ENCODE measurements at regions of chr7 and their contacts with region 1.

Region 1: GRCh38 chr7:70698219-70698832 is 433.6 kb upstream of the GALNT17 start:
- DNase-seq: no peak
- H3K4me3 ChIP-seq: no peak overlapping the region
- H3K27ac ChIP-seq: no peak overlapping the region
- H3K4me1 ChIP-seq: peaks cover 3 to 32% (median 22%) of the 10 kb centered on the region in 6 donors
- H3K27me3 ChIP-seq: peaks cover 0 to 46% (median 18%) of the 10 kb centered on the region in 7 donors
- CTCF ChIP-seq: peak; percentile 52 to 87 (median 74)
- POLR2A ChIP-seq: no peak

Region 2: GRCh38 chr7:70040970-70041766 is 657.2 kb before region 1 on chr7:
- intact Hi-C with region 1: loop called (anchors 5 kb)
- DNase-seq: no peak
- H3K4me3 ChIP-seq: no peak overlapping the region
- H3K27ac ChIP-seq: no peak overlapping the region
- H3K4me1 ChIP-seq: peaks cover 0 to 7% (median 0%) of the 10 kb centered on the region in 6 donors
- H3K27me3 ChIP-seq: no peaks in the 10 kb centered on the region
- CTCF ChIP-seq: peak in 3 of 11 experiments; percentile 11 to 24 (median 20)
- POLR2A ChIP-seq: no peak

Region 3: DNA sequence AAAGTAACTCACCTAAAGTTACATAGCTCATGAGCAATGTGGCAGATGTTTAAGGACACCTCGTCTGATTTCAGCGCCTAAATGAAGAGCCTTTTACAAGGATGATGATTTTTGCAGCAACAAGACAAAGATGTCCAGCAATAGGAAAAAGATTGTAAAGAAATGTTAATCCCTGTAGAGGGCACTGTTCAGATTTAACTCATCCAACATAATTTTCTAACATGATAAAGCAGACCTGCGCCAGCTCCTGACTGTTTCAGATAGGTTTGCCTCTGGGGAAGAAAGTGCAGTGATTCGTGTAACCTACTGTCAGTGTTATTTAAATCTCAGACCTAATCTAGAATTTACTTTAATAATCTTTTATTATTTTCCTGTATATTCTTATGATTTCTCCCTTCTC is 504.8 kb before region 1 on chr7:
- intact Hi-C with region 1: loop called (anchors 5 kb)
- DNase-seq: no peak
- H3K4me3 ChIP-seq: no peak overlapping the region
- H3K27ac ChIP-seq: no peak overlapping the region
- H3K4me1 ChIP-seq: no peaks in the 10 kb centered on the region
- H3K27me3 ChIP-seq: no peaks in the 10 kb centered on the region
- CTCF ChIP-seq: peak in 3 of 11 experiments; percentile 11 to 28 (median 17)
- POLR2A ChIP-seq: no peak

Region 4: GRCh38 chr7:70285187-70285586 is 413.1 kb before region 1 on chr7:
- intact Hi-C with region 1: no loop called
- DNase-seq: no peak
- H3K4me3 ChIP-seq: no peak overlapping the region
- H3K27ac ChIP-seq: no peak overlapping the region
- H3K4me1 ChIP-seq: no peaks in the 10 kb centered on the region
- H3K27me3 ChIP-seq: no peaks in the 10 kb centered on the region
- CTCF ChIP-seq: no peak
- POLR2A ChIP-seq: no peak

Region 5: GRCh38 chr7:70763961-70764691 is 65.8 kb after region 1 on chr7:
- intact Hi-C with region 1: no loop called
- DNase-seq: no peak
- H3K4me3 ChIP-seq: peak overlapping the region in 2 of 8 donors; percentile 3 to 39
- H3K27ac ChIP-seq: no peak overlapping the region
- H3K4me1 ChIP-seq: peaks cover 0 to 5% (median 0%) of the 10 kb centered on the region in 6 donors
- H3K27me3 ChIP-seq: no peaks in the 10 kb centered on the region
- CTCF ChIP-seq: no peak
- POLR2A ChIP-seq: no peak

Region 6: GRCh38 chr7:71165708-71166107 is 467.4 kb after region 1 on chr7:
- intact Hi-C with region 1: no loop called
- DNase-seq: no peak
- H3K4me3 ChIP-seq: no peak overlapping the region
- H3K27ac ChIP-seq: no peak overlapping the region
- H3K4me1 ChIP-seq: no peaks in the 10 kb centered on the region
- H3K27me3 ChIP-seq: no peaks in the 10 kb centered on the region
- CTCF ChIP-seq: no peak
- POLR2A ChIP-seq: no peak